ENCODE measurements at regions of chr17 and their contacts with region 1.

Region 1: DNA sequence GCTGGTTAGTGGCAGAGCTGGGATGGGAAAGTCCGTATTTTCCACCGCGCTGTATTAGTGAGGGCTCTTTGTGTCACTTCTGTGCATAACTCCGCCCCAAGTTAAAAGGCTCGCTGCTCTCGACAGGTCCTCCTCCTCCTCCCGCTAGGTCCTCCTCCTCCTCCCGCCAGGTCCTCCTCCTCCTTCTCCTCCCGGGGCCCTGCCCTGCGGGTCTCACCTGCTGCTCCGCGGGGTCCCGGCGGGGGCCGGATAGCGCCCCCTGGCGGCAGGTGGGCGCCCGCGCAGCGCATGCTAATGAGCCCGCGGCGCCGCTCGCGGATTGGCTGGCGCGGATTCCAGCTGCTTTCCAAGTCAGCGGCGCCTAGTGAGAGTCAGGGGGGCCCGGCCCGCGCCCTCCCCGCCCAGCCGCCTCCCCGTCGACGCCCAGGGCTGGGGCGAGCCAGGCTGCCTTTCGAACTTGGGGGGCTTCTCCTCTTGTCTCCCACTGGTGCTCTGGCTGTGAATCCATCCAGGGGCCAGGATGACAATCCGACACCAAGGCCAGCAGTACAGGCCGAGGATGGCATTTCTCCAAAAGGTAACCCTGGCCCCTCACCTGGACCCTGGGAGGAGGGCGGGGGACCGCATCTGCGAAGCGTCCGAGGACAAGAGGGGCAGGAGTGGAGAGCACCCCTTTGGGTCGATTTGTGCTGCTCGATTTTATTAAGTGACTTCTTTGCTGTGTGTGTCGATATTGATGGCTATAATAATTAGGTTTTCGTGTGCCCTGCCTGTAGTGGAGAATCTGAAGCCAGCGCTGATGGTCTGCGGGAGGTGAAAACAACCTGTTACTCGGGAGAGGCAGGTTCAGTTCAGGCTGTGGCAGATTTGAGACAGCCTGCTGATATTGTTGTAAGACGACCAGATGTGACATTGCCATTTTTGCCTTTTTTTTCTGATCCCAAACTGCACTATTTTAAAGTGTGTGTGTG is at the start of gene RGS9:
- DNase-seq: peak; percentile 77
- H3K4me3 ChIP-seq: peak within 1 kb of the TSS in 2 of 3 experiments; percentile 17 to 24
- H3K27ac ChIP-seq: no peak within 1 kb of the TSS
- H3K4me1 ChIP-seq: peaks cover 5% of the 10 kb centered on the region
- H3K27me3 ChIP-seq: peaks cover 13 to 17% of the 10 kb centered on the region in 2 experiments
- CTCF ChIP-seq: peak; percentile 91 to 97
- POLR2A ChIP-seq: no peak
- total RNA-seq, gene RGS9: 1.4 and 1.7 TPM in 2 replicates

Region 2: DNA sequence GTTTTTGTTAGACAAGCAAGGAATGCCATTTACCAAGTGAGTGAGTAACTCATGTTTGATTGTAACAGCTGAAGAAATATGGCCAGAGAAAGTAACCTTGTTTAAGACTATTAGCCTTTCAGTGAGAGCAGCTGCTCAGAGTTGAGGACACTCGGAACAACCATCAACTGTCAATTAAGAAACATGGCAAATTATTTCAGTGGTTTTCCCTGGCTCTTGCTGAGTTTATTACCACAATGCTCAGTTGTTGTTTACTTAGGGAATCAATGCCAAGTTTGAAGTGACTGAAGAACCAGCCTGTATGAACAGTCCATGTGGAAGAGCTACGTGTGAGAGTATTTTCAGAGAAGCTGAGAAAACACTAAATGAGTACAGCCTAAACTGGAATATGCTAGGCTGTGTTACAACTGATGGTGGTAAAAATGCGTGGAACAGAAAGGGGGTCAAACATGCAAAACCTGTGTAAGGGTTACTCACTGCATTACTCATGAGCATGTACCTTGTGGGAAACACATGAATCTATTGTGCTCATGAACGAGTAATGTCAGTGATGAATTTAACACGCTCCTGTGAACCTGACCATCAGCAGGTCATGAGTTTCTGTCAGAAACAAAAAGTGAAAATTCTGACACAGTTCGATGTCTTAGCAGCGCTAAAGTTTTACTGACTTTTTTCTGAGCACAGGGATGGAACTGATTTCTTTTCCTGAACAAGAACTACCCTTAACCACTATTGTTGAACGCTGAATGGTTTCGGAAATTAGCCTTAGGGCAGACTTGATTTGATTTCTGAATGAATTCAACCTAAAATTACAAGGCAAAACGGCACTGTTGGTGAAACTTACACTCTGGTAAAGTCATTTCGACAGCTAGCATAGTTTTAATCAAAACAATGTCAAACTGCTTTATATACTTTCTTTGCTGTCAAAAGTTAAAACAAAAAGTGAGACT is 114.3 kb before region 1 on chr17:
- CTCF ChIA-PET with region 1: no interaction called
- POLR2A ChIA-PET with region 1: no interaction called
- dilution Hi-C with region 1: no loop called
- intact Hi-C with region 1: no loop called
- DNase-seq: peak; percentile 40
- H3K4me3 ChIP-seq: no peak overlapping the region
- H3K27ac ChIP-seq: no peak overlapping the region
- H3K4me1 ChIP-seq: peaks cover 3% of the 10 kb centered on the region
- H3K27me3 ChIP-seq: no peaks in the 10 kb centered on the region
- CTCF ChIP-seq: no peak
- POLR2A ChIP-seq: no peak

Region 3: GRCh38 chr17:65109990-65110680 is 27.2 kb before region 1 on chr17:
- CTCF ChIA-PET with region 1: interaction called, 21 read pairs
- POLR2A ChIA-PET with region 1: no interaction called
- dilution Hi-C with region 1: no loop called
- intact Hi-C with region 1: no loop called
- DNase-seq: no peak
- H3K4me3 ChIP-seq: no peak overlapping the region
- H3K27ac ChIP-seq: no peak overlapping the region
- H3K4me1 ChIP-seq: no peaks in the 10 kb centered on the region
- H3K27me3 ChIP-seq: peaks cover 15 to 21% of the 10 kb centered on the region in 2 experiments
- CTCF ChIP-seq: no peak
- POLR2A ChIP-seq: no peak

Region 4: DNA sequence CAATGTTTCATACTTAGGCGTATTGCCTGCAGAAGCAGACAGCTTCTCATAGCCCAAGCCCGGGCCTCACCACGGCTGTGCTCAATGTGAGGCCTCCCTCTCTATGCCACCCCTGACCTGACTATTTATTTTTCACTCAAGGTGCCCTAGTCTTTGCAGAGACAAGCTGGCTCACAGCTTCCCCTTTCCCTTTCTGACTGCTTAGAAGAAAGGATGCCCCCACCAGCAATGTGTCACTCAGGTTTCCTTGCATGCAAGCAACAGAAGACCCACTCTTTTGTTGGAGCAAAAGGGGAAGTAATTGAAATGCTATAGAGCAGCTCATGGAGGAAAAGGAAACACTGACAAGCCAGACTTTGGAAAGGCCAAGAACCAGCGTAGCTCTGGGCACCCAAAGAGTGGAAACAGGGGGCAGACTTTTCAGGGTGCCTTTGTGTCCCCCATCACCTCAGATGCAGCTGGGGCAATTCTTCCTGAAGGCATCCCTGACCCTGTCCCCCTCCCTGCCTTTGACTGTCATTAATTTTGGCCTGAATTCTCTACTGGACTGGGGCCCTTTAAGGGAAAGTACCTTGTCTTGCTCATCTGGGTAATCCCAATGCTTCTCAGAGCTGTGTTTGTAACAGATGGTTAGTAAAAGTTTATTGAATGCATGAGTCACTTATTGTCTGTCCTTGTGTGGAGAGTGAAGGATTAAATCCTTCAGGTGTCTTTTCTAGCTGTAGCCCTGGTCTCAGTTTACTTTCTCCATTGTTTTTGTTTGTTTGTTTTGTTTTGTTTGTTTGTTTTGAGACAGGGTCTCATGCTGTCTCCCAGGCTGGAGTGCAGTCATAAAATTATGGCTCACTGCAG is 17.7 kb after region 1 on chr17:
- CTCF ChIA-PET with region 1: interaction called, 55 read pairs
- POLR2A ChIA-PET with region 1: no interaction called
- dilution Hi-C with region 1: no loop called
- intact Hi-C with region 1: no loop called
- DNase-seq: peak; percentile 35
- H3K4me3 ChIP-seq: no peak overlapping the region
- H3K27ac ChIP-seq: no peak overlapping the region
- H3K4me1 ChIP-seq: peaks cover 6% of the 10 kb centered on the region
- H3K27me3 ChIP-seq: peaks cover 17 to 20% of the 10 kb centered on the region in 2 experiments
- CTCF ChIP-seq: no peak
- POLR2A ChIP-seq: no peak

Region 5: GRCh38 chr17:65181237-65182061 is 44.1 kb after region 1 on chr17:
- CTCF ChIA-PET with region 1: interaction called, 16 read pairs
- POLR2A ChIA-PET with region 1: no interaction called
- dilution Hi-C with region 1: no loop called
- intact Hi-C with region 1: no loop called
- DNase-seq: no peak
- H3K4me3 ChIP-seq: no peak overlapping the region
- H3K27ac ChIP-seq: no peak overlapping the region
- H3K4me1 ChIP-seq: peaks cover 36% of the 10 kb centered on the region
- H3K27me3 ChIP-seq: peaks cover 0 to 3% of the 10 kb centered on the region in 2 experiments
- CTCF ChIP-seq: no peak
- POLR2A ChIP-seq: no peak